ENCODE measurements at regions of chr9 and their contacts with region 1.

Region 1: GRCh38 chr9:85741875-85742629 is at the start of gene AGTPBP1:
- DNase-seq: peak; percentile 96
- H3K4me3 Mint-ChIP-seq: peak within 1 kb of the TSS; percentile 94
- H3K27ac Mint-ChIP-seq: peak within 1 kb of the TSS; percentile 97
- H3K4me1 Mint-ChIP-seq: peaks cover 39% of the 10 kb centered on the region
- H3K27me3 Mint-ChIP-seq: peaks cover 7% of the 10 kb centered on the region
- total RNA-seq, gene AGTPBP1: 38.6 to 41.6 TPM

Region 2: GRCh38 chr9:83980395-83981125 is 1761.5 kb before region 1 on chr9 and contains the start of gene RMI1:
- CTCF ChIA-PET with region 1: no interaction called
- POLR2A ChIA-PET with region 1: no interaction called
- intact Hi-C with region 1: loop called (anchors 1 kb)
- DNase-seq: peak; percentile 99
- H3K4me3 Mint-ChIP-seq: peak within 1 kb of the TSS; percentile 96
- H3K27ac Mint-ChIP-seq: peak within 1 kb of the TSS; percentile 99
- H3K4me1 Mint-ChIP-seq: peaks cover 43% of the 10 kb centered on the region
- H3K27me3 Mint-ChIP-seq: no peaks in the 10 kb centered on the region
- total RNA-seq, gene RMI1: 20.3 to 22.6 TPM

Region 3: DNA sequence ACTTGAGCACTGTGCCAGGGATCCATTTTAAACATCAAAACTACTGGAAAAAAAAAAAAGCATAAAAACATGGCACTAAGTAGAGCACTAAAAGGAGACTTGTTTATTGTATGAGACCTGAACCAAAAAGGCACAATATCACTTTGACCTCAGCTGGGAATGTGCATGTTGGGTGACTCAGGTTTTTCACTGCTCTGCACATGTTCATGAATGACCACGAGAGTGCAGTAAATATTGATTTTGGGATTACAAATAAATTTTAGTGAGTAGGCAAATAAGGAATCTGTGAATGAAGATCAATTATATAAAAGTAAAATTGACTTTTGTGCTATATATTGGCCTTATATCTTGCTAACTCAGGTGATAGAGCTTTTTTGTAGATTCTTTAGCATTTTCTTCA is 1749.6 kb before region 1 on chr9:
- CTCF ChIA-PET with region 1: no interaction called
- POLR2A ChIA-PET with region 1: no interaction called
- intact Hi-C with region 1: no loop called
- DNase-seq: no peak
- H3K4me3 Mint-ChIP-seq: no peak overlapping the region
- H3K27ac Mint-ChIP-seq: no peak overlapping the region
- H3K4me1 Mint-ChIP-seq: no peaks in the 10 kb centered on the region
- H3K27me3 Mint-ChIP-seq: no peaks in the 10 kb centered on the region

Region 4: DNA sequence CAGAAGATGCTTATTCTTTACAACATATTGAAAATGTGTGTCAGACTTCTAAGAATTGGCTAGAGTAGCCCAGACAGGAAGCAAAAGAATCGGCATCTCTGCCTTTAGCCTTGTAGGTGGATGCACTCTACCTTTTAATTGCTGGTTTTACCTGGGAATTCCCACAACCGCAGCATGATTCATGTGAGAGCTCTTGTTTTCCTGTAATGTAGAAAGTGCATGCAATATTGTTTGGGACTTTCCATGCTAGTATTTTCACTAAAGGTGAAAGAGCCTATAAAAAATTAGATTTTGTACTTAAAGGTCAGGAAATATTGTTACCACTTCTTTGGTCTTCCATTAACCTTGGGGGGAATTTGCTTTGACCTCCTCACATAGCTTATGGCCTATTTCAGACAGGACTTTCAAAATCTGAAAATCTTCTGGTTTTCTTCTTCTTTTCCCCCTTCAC is 982.7 kb before region 1 on chr9:
- CTCF ChIA-PET with region 1: no interaction called
- POLR2A ChIA-PET with region 1: no interaction called
- intact Hi-C with region 1: loop called (anchors 10 kb)
- DNase-seq: peak; percentile 65
- H3K4me3 Mint-ChIP-seq: peak overlapping the region; percentile 6
- H3K27ac Mint-ChIP-seq: peak overlapping the region; percentile 74
- H3K4me1 Mint-ChIP-seq: peaks cover 47% of the 10 kb centered on the region
- H3K27me3 Mint-ChIP-seq: no peaks in the 10 kb centered on the region

Region 5: GRCh38 chr9:85600675-85601263 is 141.3 kb before region 1 on chr9:
- CTCF ChIA-PET with region 1: no interaction called
- POLR2A ChIA-PET with region 1: no interaction called
- intact Hi-C with region 1: no loop called
- DNase-seq: peak; percentile 33
- H3K4me3 Mint-ChIP-seq: no peak overlapping the region
- H3K27ac Mint-ChIP-seq: no peak overlapping the region
- H3K4me1 Mint-ChIP-seq: peaks cover 3% of the 10 kb centered on the region
- H3K27me3 Mint-ChIP-seq: no peaks in the 10 kb centered on the region

Region 6: DNA sequence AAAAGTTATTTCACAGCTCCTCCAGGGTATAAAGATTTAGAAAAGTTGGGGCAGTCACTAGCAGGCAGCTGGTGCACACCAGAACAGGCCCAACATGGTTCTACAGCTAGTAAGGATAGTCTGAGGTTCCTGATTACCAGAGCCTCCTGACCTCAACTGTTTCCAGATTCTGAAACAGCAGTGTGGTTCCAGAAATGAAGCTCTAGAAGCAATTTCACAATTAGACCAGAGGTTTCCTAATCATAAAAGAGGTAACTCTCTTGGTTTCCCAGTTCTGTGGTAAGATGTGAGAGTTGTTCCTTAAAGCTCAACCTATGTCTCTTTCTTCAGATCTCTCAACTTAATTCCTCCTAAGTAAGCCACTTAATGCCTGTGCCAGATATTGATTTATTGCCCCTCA is 12.2 kb before region 1 on chr9:
- CTCF ChIA-PET with region 1: no interaction called
- POLR2A ChIA-PET with region 1: interaction called, 10 read pairs
- intact Hi-C with region 1: loop called (anchors 1 kb)
- DNase-seq: no peak
- H3K4me3 Mint-ChIP-seq: no peak overlapping the region
- H3K27ac Mint-ChIP-seq: no peak overlapping the region
- H3K4me1 Mint-ChIP-seq: peaks cover 66% of the 10 kb centered on the region
- H3K27me3 Mint-ChIP-seq: no peaks in the 10 kb centered on the region

Region 7: GRCh38 chr9:86112057-86112456 is 370.0 kb after region 1 on chr9:
- CTCF ChIA-PET with region 1: no interaction called
- POLR2A ChIA-PET with region 1: no interaction called
- intact Hi-C with region 1: loop called (anchors 2 kb)
- DNase-seq: no peak
- H3K4me3 Mint-ChIP-seq: no peak overlapping the region
- H3K27ac Mint-ChIP-seq: no peak overlapping the region
- H3K4me1 Mint-ChIP-seq: peaks cover 2% of the 10 kb centered on the region
- H3K27me3 Mint-ChIP-seq: peaks cover 6% of the 10 kb centered on the region

Region 8: DNA sequence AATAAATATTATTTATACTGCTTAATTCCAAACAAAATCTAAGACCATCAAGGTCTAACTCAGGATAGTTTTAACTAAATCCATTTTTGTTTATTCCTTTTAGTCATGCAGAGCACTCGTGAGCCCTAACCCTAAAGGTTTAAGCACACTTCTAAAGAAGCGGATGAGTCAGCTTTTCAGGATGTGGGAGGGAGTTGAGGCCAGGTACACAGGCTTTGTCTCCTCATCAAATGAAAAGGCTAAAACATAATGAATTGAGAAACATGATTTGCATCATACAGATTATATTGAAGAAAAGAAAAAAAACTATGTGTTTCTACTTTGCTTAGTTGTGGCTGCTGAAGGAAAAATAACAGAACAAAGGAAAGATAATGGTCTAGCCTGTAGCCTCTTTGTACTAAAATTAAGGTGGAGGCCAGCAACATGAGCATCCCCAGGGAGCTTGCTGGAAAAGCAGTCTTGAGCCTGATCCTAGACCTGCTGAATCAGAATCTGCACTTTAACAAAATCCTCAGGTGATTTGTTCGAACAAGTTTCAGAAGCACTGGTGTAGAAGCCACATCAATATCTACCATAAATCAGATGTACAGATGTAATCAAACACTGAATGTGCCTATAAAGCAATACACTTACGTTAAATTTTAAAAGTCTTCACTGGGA is 561.4 kb after region 1 on chr9:
- CTCF ChIA-PET with region 1: no interaction called
- POLR2A ChIA-PET with region 1: no interaction called
- intact Hi-C with region 1: loop called (anchors 1 kb)
- DNase-seq: peak; percentile 68
- H3K4me3 Mint-ChIP-seq: peak overlapping the region; percentile 23
- H3K27ac Mint-ChIP-seq: peak overlapping the region; percentile 90
- H3K4me1 Mint-ChIP-seq: peaks cover 38% of the 10 kb centered on the region
- H3K27me3 Mint-ChIP-seq: no peaks in the 10 kb centered on the region

Region 9: DNA sequence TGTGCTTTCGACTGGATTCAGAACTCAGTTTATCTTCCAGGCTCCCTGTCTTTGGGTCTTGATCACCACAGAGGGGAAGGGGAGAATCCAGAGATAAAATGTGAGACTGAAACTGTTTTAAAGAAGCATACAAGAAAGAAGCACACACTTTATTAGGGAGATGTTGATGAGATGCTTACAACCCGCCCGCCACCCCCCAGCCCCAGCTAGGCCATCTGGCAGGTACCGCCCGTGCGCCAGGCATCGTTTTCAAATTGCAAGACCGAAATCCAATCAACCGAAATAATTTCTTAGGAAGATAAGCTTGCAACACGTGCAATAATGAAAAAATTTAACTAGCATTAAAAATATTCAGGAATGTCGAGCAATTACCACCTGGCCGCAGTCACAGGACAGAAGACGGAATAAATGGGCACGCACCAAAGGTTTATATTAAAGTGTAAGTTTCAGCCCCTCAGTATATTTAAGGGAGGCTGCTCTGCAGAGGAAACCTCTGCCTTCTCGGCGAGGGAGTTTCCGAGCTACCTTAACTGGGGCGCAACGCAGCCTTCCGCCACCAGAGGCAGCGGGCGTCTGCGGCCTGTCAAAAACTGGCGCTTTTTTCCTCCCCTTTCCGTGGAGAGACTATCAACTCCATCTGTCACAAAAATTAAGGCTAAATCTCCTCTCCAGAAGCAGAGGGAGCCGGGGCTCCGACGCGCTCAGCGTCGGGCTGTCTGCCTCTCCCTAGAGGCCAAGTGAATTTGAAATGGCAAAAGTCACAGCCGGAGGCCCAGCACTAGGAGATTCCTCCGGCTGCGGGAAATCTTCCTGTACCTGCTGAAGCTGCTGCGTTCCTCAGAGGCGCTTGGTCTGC is 1206.2 kb after region 1 on chr9:
- CTCF ChIA-PET with region 1: no interaction called
- POLR2A ChIA-PET with region 1: no interaction called
- intact Hi-C with region 1: loop called (anchors 5 kb)
- DNase-seq: peak; percentile 83
- H3K4me3 Mint-ChIP-seq: peak overlapping the region; percentile 75
- H3K27ac Mint-ChIP-seq: no peak overlapping the region
- H3K4me1 Mint-ChIP-seq: peaks cover 11% of the 10 kb centered on the region
- H3K27me3 Mint-ChIP-seq: peaks cover 19% of the 10 kb centered on the region